CD8-positive, alpha-beta T cell (primary cell): ENCODE measurements at regions of chr1 and their contacts with region 1.

Region 1: GRCh38 chr1:23273450-23274133 is 56.3 kb upstream of the HTR1D start:
- DNase-seq: no peak
- ATAC-seq: no peak
- H3K4me3 ChIP-seq: no peak overlapping the region
- H3K4me3 Mint-ChIP-seq: no peak overlapping the region
- H3K27ac ChIP-seq: no peak overlapping the region
- H3K27ac Mint-ChIP-seq: no peak overlapping the region
- H3K4me1 ChIP-seq: no peaks in the 10 kb centered on the region
- H3K4me1 Mint-ChIP-seq: no peaks in the 10 kb centered on the region
- H3K27me3 ChIP-seq: peaks cover 4 to 11% of the 10 kb centered on the region in 2 experiments
- H3K27me3 Mint-ChIP-seq: peaks cover 32% of the 10 kb centered on the region
- CTCF ChIP-seq: no peak

Region 2: DNA sequence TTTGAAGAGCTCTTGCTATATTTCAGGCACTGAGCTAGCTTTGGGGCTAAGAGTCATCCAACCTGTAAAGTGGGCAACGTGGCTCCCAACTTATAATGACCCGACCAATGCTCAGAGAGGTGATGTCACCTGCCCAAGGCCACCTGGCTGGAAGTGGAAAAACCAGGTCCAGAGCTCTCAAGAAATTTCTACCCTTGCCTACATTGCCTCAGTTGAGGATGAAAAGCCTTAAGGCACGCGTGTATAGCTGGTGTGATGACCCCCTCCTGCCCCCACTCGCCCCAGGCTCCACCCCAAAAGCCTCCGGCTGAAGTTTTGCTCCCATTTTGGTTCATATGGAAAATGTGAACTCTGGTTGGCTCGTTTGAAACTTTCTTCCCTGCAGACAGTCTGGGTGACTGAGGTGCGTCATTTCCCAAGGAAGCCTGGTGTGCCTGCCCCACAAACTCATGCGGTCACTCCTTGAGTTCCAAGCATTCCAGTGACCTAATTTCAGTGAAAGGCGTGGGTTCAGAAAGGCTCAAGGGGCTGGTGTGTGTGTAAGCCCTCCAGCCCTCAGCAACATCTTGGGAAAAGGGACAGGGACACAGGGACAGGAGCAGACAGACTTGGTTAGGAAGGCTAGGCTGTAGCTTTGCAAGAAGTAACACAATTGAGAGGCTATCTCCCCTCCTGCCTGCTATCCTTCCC is 76.8 kb before region 1 on chr1:
- CTCF ChIA-PET with region 1: no interaction called
- POLR2A ChIA-PET with region 1: no interaction called
- intact Hi-C with region 1: loop called in 1 of 2 experiments (anchors 5 kb)
- DNase-seq: no peak
- ATAC-seq: no peak
- H3K4me3 ChIP-seq: no peak overlapping the region
- H3K4me3 Mint-ChIP-seq: no peak overlapping the region
- H3K27ac ChIP-seq: no peak overlapping the region
- H3K27ac Mint-ChIP-seq: no peak overlapping the region
- H3K4me1 ChIP-seq: no peaks in the 10 kb centered on the region
- H3K4me1 Mint-ChIP-seq: no peaks in the 10 kb centered on the region
- H3K27me3 ChIP-seq: no peaks in the 10 kb centered on the region
- H3K27me3 Mint-ChIP-seq: peaks cover 29% of the 10 kb centered on the region
- CTCF ChIP-seq: no peak